Activated CD8-positive, alpha-beta T cell treated with anti-CD3 and anti-CD28 coated beads, Interleukin-2, amount 10 ng/mL, durations not matched to agents 7 days and 5 days (primary cell): ENCODE measurements at regions of chr12 and their contacts with region 1.

Region 1: GRCh38 chr12:12786716-12787601 is 1.5 kb downstream of the APOLD1 start:
- DNase-seq: peak; percentile 72
- ATAC-seq: peak; percentile 94
- H3K4me3 Mint-ChIP-seq: peak overlapping the region; percentile 80
- H3K27ac Mint-ChIP-seq: peak overlapping the region; percentile 87
- H3K4me1 Mint-ChIP-seq: peaks cover 43% of the 10 kb centered on the region
- H3K27me3 Mint-ChIP-seq: no peaks in the 10 kb centered on the region

Region 2: DNA sequence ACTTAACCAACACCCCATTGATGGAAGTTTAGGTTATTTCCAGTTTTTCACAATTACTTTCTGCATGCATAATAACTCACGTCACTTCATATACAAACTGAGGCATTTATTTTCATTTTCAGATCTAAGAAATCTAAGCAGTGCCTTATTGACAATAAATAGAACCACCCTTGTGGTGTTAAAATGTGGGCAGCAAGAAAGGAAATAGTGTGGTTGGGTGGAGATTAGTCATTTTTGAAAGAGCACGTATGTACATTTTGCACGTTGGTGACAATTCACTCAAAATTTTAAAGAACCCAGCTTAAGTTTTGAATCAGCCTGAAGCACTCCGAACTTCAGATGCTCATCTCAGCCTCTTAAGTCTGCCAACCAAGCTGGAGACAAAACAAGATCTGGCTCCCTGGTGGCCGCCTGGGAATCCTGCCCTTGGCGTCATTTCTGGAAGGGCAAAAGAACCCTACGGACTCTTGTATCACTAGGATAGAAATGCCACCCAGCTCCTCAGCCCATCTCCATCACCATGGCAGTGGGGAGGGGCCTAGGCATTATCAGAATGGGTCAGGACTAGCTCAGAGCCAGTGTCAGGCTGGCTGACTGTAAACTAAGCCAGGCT is 805.7 kb before region 1 on chr12:
- CTCF ChIA-PET with region 1: no interaction called
- POLR2A ChIA-PET with region 1: no interaction called
- DNase-seq: peak; percentile 80
- ATAC-seq: peak; percentile 94
- H3K4me3 Mint-ChIP-seq: peak overlapping the region; percentile 52
- H3K27ac Mint-ChIP-seq: peak overlapping the region; percentile 94
- H3K4me1 Mint-ChIP-seq: peaks cover 45% of the 10 kb centered on the region
- H3K27me3 Mint-ChIP-seq: no peaks in the 10 kb centered on the region

Region 3: GRCh38 chr12:12592930-12593329 is 194.0 kb before region 1 on chr12:
- CTCF ChIA-PET with region 1: no interaction called
- POLR2A ChIA-PET with region 1: no interaction called
- DNase-seq: no peak
- ATAC-seq: no peak
- H3K4me3 Mint-ChIP-seq: no peak overlapping the region
- H3K27ac Mint-ChIP-seq: no peak overlapping the region
- H3K4me1 Mint-ChIP-seq: peaks cover 9% of the 10 kb centered on the region
- H3K27me3 Mint-ChIP-seq: peaks cover 9% of the 10 kb centered on the region

Region 4: DNA sequence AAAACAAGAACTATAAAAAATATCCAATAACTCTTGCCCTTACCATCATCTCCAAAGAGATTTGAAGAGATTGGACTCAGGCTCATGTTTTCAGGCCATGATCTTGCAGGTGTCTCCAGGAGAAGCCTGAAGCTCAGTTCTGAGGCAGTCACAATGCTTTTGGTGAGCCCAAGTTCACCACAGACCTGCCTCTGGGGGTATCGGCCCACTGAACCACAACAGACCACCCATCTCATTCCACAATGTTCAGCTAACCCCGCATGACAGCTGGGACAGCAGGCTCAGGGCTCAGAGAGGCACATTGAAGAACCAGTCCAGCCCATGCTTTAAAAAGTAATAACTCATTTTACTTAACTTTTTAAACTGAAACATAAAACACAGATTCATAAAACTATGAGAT is 29.8 kb before region 1 on chr12:
- CTCF ChIA-PET with region 1: no interaction called
- POLR2A ChIA-PET with region 1: no interaction called
- DNase-seq: no peak
- ATAC-seq: no peak
- H3K4me3 Mint-ChIP-seq: no peak overlapping the region
- H3K27ac Mint-ChIP-seq: no peak overlapping the region
- H3K4me1 Mint-ChIP-seq: no peaks in the 10 kb centered on the region
- H3K27me3 Mint-ChIP-seq: no peaks in the 10 kb centered on the region

Region 5: DNA sequence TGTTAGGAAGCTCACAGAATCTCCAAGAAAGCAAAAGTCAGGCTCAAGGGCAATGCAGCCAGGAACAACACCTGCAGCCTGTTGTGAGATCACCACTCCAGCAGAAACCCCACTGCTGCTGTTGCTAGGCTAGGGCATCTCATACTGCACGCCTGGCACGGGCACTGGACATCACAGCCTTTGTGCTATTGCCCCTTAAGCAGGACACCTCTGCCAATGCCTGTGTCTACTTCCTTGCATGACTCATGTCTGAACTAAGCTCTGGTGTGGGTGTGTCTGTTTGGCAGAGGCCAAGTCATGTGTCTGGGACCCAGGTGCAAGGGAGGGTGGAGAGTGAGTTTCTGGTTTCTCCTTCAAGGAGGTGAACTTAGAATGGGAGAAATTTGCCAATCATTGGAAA is 16.2 kb after region 1 on chr12:
- CTCF ChIA-PET with region 1: interaction called, 80 read pairs
- POLR2A ChIA-PET with region 1: interaction called, 13 read pairs
- DNase-seq: peak; percentile 71
- ATAC-seq: peak; percentile 74
- H3K4me3 Mint-ChIP-seq: peak overlapping the region; percentile 33
- H3K27ac Mint-ChIP-seq: peak overlapping the region; percentile 81
- H3K4me1 Mint-ChIP-seq: peaks cover 60% of the 10 kb centered on the region
- H3K27me3 Mint-ChIP-seq: no peaks in the 10 kb centered on the region